AG04450 (cell line): ENCODE measurements at regions of chr2 and their contacts with region 1.

Region 1: DNA sequence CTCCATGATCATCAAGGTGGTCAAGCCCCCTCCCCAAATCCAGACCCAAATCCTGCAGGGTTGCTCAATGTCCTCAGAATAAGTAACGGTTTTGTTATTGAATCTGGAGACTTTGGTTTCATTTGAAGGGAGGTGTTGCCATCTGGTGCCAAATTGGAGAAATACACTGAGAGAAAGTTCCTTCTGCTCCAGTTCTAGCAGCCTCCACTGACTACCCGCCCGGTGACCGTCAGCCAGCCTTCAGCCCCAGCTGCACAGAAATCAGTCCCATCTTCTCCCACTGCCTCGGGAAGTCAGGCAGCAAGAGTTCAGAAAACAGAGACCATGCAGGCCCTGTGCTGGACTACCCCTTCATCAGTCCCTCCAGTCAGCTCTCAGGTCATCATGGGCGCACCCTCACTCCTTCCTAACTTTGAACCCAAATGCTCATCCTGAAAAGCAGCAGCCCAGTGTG is 38.7 kb downstream of the PKDCC start:
- DNase-seq: peak; percentile 45
- H3K4me3 ChIP-seq: no peak overlapping the region
- H3K27ac ChIP-seq: no peak overlapping the region
- H3K27me3 ChIP-seq: peaks cover 4% of the 10 kb centered on the region
- CTCF ChIP-seq: peak; percentile 75

Region 2: DNA sequence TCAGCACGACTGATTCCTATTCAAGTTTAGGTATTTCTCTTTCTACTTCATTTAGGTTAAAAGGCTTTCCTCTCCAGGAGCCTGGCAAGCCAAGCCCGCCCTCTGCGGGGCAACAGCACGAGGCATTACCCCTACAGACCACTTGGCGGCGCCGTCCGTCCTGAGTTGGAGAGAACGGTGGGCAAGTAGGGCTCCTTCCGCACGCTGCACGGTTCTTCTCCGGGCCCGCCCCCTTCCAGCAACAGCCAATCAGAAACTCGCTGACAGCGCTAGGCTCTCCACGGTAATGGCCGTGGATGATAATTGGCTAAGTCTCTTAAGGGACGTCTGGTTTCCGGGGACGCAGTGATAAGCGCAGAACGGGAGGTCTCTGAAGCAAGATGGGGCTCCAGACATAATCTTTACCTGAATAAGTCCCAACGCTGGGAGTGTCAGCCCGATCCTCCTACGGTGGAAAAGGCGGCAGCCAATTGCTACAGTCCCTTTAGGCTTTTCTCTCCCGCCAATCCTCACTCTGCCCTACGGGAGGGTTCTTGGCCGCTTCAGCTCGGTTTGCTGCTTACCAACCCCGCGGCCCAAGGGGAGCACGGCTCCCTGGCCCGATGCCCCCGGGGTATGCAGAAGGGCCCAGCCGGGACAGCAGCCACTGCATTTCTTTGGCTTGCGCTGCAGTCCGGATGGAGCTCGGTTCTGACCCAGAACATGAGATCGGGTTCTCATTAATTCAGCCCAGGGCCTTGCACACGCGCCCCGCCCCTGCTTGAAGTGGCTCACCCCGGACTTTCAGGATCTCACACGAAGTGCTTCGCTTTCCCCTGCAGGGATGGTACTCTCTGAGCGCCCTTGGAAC is 245.6 kb before region 1 on chr2:
- CTCF ChIA-PET with region 1: interaction called, 35 read pairs
- POLR2A ChIA-PET with region 1: no interaction called
- DNase-seq: peak; percentile 92
- H3K4me3 ChIP-seq: peak overlapping the region; percentile 81
- H3K27ac ChIP-seq: no peak overlapping the region
- H3K27me3 ChIP-seq: peaks cover 11% of the 10 kb centered on the region
- CTCF ChIP-seq: peak; percentile 99

Region 3: DNA sequence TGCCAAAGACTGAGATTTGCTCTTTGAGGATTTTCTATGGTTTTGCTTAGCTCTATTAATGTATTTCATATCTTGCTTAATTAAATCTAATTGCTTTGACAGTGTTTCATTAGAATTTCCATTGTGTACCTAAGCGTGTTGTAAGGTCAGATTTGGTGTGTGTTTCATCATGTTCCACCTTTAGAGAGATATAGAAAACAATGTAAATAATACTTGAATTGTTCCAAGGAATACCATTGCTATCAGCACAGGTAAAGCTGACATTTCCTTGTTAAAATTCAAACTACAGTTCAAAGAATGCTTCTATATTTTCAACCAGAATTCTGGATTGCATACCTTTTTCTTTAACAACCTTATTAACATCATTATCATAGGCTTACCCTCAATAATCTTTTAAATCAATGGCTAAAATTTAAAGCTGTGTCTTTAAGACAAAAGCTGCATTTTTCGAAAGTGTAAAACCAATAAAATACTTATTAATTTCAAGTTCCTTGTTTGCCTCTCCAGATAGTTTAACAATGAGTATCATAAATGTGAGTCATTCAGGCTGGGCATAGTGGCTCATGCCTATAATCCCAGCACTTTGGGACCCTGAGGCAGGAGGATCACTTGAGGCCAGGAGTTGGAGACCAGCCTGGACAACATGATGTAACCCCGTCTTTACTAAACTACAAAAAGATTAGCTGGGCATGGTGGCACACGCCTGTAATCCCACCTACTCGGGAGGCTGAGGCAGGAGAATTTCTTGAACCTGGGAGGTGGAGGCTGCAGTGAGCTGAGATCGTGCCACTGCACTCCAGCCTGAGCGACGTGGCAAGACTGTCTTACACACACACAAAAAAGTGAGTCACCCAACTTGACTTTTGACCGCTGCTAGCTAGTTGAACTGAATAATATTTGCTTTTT is 226.7 kb before region 1 on chr2:
- CTCF ChIA-PET with region 1: interaction called, 418 read pairs
- POLR2A ChIA-PET with region 1: no interaction called
- DNase-seq: no peak
- H3K4me3 ChIP-seq: no peak overlapping the region
- H3K27ac ChIP-seq: no peak overlapping the region
- H3K27me3 ChIP-seq: no peaks in the 10 kb centered on the region
- CTCF ChIP-seq: no peak

Region 4: DNA sequence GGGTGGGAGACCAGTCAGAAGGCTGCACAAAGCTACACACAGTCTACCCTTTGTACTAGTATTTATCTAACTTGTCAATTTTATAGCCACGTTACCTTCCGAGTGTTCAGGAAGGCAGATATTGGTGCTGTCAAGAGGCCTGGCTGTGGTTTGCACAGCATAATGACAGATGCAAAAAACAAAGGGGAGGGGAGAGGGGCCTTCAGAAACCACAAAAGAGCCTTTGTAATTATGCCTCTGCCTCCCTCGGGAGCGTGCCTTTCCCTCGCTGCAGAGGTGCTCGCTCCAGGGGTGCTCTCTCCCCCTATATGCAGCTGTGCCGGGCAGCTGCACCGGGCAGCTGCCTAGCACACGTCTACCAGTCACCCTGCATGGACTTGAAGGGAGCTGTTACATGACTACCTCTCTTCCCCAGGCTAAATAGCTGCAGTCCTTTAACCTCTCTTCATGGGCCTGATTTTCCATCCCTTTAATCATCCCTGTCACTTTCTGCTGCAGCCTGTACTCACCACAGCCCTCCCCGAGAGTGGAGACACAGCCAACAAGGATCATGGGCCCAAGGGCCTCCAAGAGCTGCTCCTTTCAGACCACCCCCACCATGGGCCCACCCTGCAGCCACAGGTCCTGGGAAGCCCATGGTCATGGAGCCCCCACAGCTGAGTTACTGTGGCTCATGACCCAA is 207.2 kb before region 1 on chr2:
- CTCF ChIA-PET with region 1: interaction called, 481 read pairs
- POLR2A ChIA-PET with region 1: no interaction called
- DNase-seq: no peak
- H3K4me3 ChIP-seq: no peak overlapping the region
- H3K27ac ChIP-seq: no peak overlapping the region
- H3K27me3 ChIP-seq: peaks cover 4% of the 10 kb centered on the region
- CTCF ChIP-seq: no peak

Region 5: GRCh38 chr2:41966431-41966893 is 120.1 kb before region 1 on chr2:
- CTCF ChIA-PET with region 1: interaction called, 18 read pairs
- POLR2A ChIA-PET with region 1: interaction called, 4 read pairs
- DNase-seq: peak; percentile 82
- H3K4me3 ChIP-seq: no peak overlapping the region
- H3K27ac ChIP-seq: peak overlapping the region; percentile 49
- H3K27me3 ChIP-seq: peaks cover 4% of the 10 kb centered on the region
- CTCF ChIP-seq: no peak

Region 6: GRCh38 chr2:42053791-42054701 is 32.5 kb before region 1 on chr2:
- CTCF ChIA-PET with region 1: interaction called, 20 read pairs
- POLR2A ChIA-PET with region 1: interaction called, 20 read pairs
- DNase-seq: no peak
- H3K4me3 ChIP-seq: no peak overlapping the region
- H3K27ac ChIP-seq: peak overlapping the region; percentile 11
- H3K27me3 ChIP-seq: no peaks in the 10 kb centered on the region
- CTCF ChIP-seq: no peak

Region 7: GRCh38 chr2:42328148-42328833 is 241.8 kb after region 1 on chr2:
- CTCF ChIA-PET with region 1: interaction called, 22 read pairs
- POLR2A ChIA-PET with region 1: no interaction called
- DNase-seq: no peak
- H3K4me3 ChIP-seq: no peak overlapping the region
- H3K27ac ChIP-seq: no peak overlapping the region
- H3K27me3 ChIP-seq: no peaks in the 10 kb centered on the region
- CTCF ChIP-seq: peak; percentile 54